WTC11 (cell line): ENCODE measurements at regions of chr17 and their contacts with region 1.

Region 1: DNA sequence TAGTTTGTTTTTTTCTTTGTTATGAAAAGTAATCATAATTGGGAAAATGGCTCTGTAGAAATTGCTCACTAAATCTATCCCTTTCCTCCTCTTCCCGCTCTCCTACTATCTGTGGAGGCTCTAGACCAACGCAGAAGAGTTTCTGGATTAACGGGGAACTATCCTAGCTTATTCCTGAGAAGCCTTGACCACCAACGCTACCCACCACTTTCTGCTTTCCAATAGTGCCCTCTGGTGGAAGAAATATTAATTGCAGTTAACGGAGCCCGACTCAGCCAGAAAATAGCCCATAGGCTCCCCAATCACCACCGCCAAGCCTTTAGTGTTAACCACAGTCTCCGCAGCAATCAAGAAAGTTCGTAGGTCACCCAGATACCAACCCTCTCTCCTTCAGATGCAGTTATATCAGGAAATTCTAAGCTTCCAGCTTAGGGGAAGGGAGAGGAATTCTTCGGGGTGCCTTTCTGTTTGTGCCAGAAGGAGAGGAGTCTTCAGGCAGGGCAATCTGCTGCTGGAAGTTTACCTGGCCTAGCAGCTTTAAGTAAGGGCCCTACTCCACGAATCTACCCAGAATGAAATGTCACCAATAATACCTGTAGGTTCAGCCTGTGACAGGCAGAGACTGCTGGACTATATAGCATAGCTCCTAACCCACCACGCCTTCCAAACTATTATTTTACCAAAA is 23.0 kb upstream of the NSRP1 start:
- DNase-seq: peak; percentile 72
- ATAC-seq: peak; percentile 92
- H3K4me3 Mint-ChIP-seq: no peak overlapping the region
- H3K27ac Mint-ChIP-seq: no peak overlapping the region
- H3K4me1 Mint-ChIP-seq: 0 out of 2 replicates have a peak, but pooled peaks cover 3% of the 10 kb centered on the region
- H3K27me3 Mint-ChIP-seq: no peaks in the 10 kb centered on the region; the same call in 1 of the 2 replicates
- CTCF ChIP-seq: peak; percentile 94

Region 2: GRCh38 chr17:29401258-29401657 is 692.3 kb before region 1 on chr17:
- CTCF ChIA-PET with region 1: no interaction called
- POLR2A ChIA-PET with region 1: no interaction called
- DNase-seq: no peak
- ATAC-seq: no peak
- H3K4me3 Mint-ChIP-seq: no peak overlapping the region
- H3K27ac Mint-ChIP-seq: peak overlapping the region; percentile 57
- H3K4me1 Mint-ChIP-seq: peaks cover 7% of the 10 kb centered on the region; the same call in 1 of the 2 replicates
- H3K27me3 Mint-ChIP-seq: no peaks in the 10 kb centered on the region
- CTCF ChIP-seq: no peak

Region 3: DNA sequence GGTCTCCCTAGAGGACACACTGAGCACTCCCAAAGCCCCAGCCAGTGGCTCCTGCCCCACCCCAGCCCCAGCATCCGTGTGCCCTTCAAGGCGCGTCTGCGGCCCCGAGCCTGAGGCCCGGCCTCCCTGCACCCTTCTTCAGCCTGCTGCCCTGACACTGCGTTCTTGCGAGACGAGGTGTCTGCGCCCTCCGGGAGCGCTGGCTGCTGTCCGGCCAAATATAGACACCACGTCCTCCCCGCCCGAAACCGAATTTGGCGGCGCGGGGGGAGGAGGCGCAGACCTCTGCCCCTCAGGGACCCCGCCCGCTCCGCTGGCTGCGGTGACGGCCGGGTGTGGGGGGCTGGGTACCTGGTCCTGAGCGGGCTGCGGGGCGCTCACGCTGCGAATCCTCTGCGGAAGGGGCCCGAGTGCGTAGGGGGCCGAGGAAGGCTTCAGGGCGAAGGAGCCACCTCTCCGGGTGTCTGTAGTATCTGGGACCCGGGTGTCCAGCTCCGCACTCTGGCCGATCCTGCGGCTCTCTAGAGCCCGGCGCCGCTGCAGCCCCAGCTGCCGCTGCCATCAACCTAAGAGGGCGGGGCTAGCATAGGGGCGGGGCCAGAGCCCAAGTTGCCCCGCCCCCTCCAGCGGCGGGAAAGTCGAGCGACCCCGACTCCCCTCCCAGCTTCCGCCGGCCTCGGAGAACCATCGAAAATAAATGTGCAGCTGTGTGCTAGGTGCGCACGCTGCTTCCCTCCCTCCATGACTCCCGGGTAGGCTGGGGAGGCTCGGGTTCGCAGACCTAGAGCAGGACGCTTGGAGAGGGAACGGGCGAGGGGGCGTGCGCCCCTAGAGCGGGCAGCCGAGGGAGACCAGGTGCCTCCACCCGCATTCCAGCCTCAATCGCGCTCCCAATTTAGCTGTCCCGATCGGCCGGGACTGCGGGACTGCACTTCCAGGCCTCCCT is 471.0 kb before region 1 on chr17 and contains the start of gene CORO6:
- CTCF ChIA-PET with region 1: interaction called, 30 read pairs
- POLR2A ChIA-PET with region 1: no interaction called
- DNase-seq: peak; percentile 86
- ATAC-seq: peak; percentile 58
- H3K4me3 Mint-ChIP-seq: peak within 1 kb of the TSS; percentile 79
- H3K27ac Mint-ChIP-seq: peak within 1 kb of the TSS; percentile 82
- H3K4me1 Mint-ChIP-seq: peaks cover 48% of the 10 kb centered on the region
- H3K27me3 Mint-ChIP-seq: peaks cover 65% of the 10 kb centered on the region
- CTCF ChIP-seq: no peak
- total RNA-seq, gene CORO6: 6.4 to 8.9 TPM (median 7.5 TPM) in 3 replicates

Region 4: DNA sequence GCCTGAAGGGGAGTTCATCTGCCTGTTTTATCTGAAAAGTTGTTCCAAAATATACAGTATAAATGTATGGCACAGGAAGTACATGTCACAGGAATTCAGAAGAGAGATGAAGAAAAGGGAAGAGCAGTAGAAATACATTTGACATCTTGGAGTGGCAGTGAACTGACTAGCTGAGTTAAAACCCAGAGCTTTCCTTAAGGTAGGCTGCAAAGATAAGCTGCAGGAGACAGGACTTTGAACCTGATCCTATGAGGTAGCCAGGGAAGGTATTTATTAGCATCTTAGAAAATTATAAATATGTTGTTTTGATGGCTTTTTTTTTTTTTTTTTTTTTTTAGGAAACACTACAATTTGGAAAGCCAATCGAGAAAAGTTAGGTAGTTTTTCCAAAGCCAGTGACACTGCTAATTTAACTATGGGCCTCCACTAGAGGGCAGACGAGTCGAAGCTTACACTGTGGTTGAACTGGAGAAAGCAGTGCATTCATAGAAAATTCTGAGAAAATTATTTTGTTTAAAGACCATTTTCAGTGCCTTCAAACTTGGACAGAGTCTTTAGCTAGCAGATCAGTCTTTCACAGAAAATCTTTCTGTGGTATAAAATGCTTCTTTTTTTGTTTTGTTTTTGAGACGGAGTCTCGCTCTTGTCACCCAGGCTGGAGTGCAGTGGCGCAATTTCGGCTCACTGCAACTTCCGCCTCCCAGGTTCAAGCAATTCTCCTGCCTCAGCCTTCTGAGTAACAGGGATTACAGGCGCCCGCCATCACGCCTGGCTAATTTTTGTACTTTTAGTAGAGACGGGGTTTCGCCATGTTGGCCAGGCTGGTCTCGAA is 285.9 kb before region 1 on chr17:
- CTCF ChIA-PET with region 1: interaction called, 16 read pairs
- POLR2A ChIA-PET with region 1: no interaction called
- DNase-seq: peak; percentile 62
- ATAC-seq: peak; percentile 65
- H3K4me3 Mint-ChIP-seq: no peak overlapping the region
- H3K27ac Mint-ChIP-seq: no peak overlapping the region
- H3K4me1 Mint-ChIP-seq: peaks cover 6% of the 10 kb centered on the region; the same call in 1 of the 2 replicates
- H3K27me3 Mint-ChIP-seq: no peaks in the 10 kb centered on the region
- CTCF ChIP-seq: peak; percentile 64

Region 5: DNA sequence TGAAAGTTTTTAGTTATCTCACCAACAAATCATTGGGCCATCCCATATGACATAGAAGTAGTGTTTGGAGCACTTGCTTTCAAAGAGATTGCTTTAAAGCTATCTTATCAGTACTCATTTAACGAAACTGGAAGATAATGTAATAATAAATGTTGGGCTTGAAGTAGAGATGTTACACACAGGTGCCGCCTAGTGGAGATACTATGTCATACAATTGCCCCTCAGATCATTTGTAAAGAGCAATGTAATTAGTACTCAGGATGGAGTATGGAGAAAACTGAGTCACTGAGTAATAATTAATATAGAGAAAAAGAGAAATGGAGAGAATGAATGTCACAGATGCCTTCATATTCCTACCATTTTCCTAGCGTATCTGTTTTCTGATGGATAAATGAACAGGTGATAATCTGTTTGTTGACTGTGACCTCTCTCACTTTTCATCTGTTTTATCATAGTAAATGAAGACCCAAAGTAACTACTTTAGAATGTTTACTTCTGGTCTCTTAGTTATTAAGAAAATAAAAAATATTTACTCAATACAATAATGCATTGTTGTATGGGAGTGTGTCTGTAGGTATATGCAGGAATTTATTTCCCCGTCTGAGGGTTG is 71.8 kb before region 1 on chr17:
- CTCF ChIA-PET with region 1: interaction called, 27 read pairs
- POLR2A ChIA-PET with region 1: no interaction called
- DNase-seq: no peak
- ATAC-seq: peak; percentile 56; the same call in 1 of the 2 replicates
- H3K4me3 Mint-ChIP-seq: no peak overlapping the region
- H3K27ac Mint-ChIP-seq: no peak overlapping the region
- H3K4me1 Mint-ChIP-seq: no peaks in the 10 kb centered on the region
- H3K27me3 Mint-ChIP-seq: peaks cover 2% of the 10 kb centered on the region; the same call in 1 of the 2 replicates
- CTCF ChIP-seq: peak; percentile 84

Region 6: GRCh38 chr17:30062372-30062771 is 31.2 kb before region 1 on chr17:
- CTCF ChIA-PET with region 1: interaction called, 35 read pairs
- POLR2A ChIA-PET with region 1: no interaction called
- DNase-seq: no peak
- ATAC-seq: peak; percentile 73
- H3K4me3 Mint-ChIP-seq: no peak overlapping the region
- H3K27ac Mint-ChIP-seq: no peak overlapping the region
- H3K4me1 Mint-ChIP-seq: no peaks in the 10 kb centered on the region
- H3K27me3 Mint-ChIP-seq: peaks cover 11% of the 10 kb centered on the region
- CTCF ChIP-seq: no peak

Region 7: DNA sequence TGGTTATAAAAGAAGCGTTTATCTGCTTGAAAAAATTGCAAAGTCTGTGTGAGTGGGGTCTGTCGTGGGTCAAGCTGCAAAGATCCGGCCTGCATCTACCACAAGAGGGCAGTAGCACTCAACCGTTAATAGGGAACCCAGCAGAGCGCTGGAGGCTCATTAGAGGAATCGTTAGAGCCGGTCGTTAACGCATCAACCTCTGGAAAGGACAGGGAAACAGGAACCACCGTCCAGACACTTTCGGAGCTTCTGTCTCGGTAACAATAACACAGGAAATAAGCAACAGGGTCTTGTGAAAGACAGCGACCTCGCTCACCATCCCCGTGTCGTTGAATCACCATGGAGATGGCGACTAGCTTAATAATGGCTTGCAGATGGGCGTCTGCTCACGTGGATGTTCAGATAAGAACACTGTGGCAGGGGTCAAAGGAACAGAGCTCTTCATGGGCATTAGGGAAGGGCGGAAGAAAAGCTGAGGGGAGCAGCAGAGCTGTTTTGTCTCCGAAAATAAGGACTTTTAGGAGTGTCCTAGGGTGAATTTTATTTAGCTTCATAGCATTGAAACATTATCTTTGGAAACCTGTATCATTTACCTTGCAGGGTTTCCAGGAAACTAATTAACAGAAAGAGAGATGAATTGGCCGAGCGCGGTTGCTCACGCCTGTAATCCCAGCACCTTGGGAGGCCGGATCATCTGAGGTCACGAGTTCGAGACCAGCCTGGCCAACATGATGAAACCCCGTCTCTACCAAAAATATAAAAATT is 11.2 kb after region 1 on chr17:
- CTCF ChIA-PET with region 1: interaction called, 114 read pairs
- POLR2A ChIA-PET with region 1: interaction called, 3 read pairs
- DNase-seq: peak; percentile 78
- ATAC-seq: peak; percentile 96
- H3K4me3 Mint-ChIP-seq: peak overlapping the region; percentile 72
- H3K27ac Mint-ChIP-seq: peak overlapping the region; percentile 79
- H3K4me1 Mint-ChIP-seq: peaks cover 5% of the 10 kb centered on the region; the same call in 1 of the 2 replicates
- H3K27me3 Mint-ChIP-seq: no peaks in the 10 kb centered on the region
- CTCF ChIP-seq: peak; percentile 61